ENCODE measurements at regions of chr6 and their contacts with region 1.

Region 1: GRCh38 chr6:133952815-133953633 is at the start of gene TBPL1:
- DNase-seq: peak; percentile 92
- H3K4me3 Mint-ChIP-seq: peak within 1 kb of the TSS; percentile 87
- H3K27ac Mint-ChIP-seq: peak within 1 kb of the TSS; percentile 86
- H3K4me1 Mint-ChIP-seq: peaks cover 36% of the 10 kb centered on the region
- H3K27me3 Mint-ChIP-seq: no peaks in the 10 kb centered on the region
- total RNA-seq, gene TBPL1: 27.0 to 27.6 TPM

Region 2: DNA sequence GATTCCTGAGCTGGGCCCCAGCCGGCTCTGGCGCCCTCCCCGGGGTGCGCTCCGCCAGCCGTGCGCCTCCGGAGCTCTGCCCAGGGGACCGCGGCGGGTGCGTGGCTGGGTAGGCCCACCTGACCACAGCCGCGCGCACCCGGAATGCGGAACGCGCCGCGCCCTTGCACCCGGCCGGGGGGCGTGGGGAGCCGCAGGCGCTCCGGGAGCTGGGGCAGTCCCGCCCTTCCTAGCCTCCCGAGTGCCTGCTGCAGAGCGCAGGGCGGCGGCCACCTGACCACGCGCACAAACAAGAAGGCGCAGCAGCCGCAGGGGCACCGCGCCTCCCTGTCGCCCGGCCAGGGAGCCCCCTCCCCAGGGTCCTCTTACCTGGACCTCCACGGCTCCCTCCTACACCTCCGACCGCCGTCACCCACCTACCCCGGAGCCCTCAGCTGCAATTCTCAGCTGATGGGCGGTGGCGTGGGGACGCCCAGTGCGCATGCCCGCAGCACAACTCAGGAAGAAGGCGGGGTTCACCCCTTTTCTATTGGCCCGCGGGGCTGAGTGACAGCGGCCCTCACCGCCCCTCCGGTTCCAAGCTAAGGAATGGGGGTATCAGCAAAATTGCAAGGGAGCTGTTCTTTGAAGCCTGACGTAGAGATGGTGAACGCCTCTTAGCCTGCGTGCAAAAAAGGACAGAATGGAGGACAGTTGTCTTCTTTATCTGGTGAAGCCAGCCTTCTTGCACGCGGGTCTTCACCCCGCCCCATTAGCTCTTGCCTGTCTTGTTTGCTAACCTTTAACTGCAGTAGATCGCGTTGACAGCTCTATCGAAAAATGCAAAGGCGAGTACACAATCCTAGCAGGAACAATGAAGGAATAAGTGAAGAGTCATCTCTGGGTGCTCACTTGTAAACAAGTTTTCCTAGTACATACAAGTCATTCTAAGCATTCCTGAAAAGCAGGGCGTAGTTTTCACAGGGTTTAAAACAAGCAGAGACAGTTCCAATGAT is 1440.1 kb before region 1 on chr6 and contains the start of gene STX7:
- CTCF ChIA-PET with region 1: no interaction called
- intact Hi-C with region 1: loop called (anchors 5 kb)
- DNase-seq: peak; percentile 83
- H3K4me3 Mint-ChIP-seq: peak within 1 kb of the TSS; percentile 95
- H3K27ac Mint-ChIP-seq: no peak within 1 kb of the TSS
- H3K4me1 Mint-ChIP-seq: peaks cover 26% of the 10 kb centered on the region
- H3K27me3 Mint-ChIP-seq: no peaks in the 10 kb centered on the region
- total RNA-seq, gene STX7: 11.3 to 11.7 TPM

Region 3: DNA sequence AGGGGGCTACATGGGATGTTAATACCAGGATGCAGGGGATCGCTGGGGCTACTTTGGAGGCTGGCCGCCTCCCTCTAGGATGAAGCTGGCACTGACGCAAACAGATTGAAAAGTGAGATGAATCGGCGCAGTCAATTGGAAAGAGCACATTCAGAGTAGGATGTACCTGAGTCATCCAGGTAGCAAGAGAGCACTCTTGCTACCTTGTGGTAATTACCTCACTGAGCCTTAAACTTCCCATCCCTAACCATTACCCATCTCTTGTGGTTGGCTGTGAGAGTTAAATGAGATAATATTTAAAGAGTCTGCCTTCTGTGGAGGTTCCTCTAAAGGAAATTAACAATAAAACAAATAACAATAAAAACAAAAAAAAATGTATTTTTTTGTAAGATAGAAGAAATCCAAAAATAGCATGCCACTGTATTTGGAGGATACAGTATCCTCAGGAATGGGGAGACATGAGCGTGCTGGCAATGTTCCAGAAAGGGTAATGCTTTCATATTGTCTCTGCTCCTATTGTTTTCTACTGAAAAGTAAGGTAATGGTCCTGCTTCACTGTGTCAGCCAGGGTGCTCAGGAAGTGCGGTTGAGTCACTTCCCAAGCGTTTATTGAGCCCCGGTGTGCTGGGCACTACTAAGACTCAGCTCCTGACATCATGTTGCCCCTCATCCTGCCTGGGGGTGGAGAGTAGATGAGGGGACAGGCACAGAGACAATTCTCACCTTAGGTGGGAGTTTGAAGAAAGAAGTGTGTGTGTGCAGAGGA is 410.8 kb before region 1 on chr6:
- CTCF ChIA-PET with region 1: no interaction called
- intact Hi-C with region 1: no loop called
- DNase-seq: peak; percentile 5
- H3K4me3 Mint-ChIP-seq: no peak overlapping the region
- H3K27ac Mint-ChIP-seq: no peak overlapping the region
- H3K4me1 Mint-ChIP-seq: no peaks in the 10 kb centered on the region
- H3K27me3 Mint-ChIP-seq: peaks cover 17% of the 10 kb centered on the region

Region 4: GRCh38 chr6:133966654-133967329 is 13.8 kb after region 1 on chr6:
- CTCF ChIA-PET with region 1: interaction called, 5 read pairs
- intact Hi-C with region 1: loop called (anchors 1 kb)
- DNase-seq: no peak
- H3K4me3 Mint-ChIP-seq: no peak overlapping the region
- H3K27ac Mint-ChIP-seq: no peak overlapping the region
- H3K4me1 Mint-ChIP-seq: peaks cover 64% of the 10 kb centered on the region
- H3K27me3 Mint-ChIP-seq: no peaks in the 10 kb centered on the region

Region 5: DNA sequence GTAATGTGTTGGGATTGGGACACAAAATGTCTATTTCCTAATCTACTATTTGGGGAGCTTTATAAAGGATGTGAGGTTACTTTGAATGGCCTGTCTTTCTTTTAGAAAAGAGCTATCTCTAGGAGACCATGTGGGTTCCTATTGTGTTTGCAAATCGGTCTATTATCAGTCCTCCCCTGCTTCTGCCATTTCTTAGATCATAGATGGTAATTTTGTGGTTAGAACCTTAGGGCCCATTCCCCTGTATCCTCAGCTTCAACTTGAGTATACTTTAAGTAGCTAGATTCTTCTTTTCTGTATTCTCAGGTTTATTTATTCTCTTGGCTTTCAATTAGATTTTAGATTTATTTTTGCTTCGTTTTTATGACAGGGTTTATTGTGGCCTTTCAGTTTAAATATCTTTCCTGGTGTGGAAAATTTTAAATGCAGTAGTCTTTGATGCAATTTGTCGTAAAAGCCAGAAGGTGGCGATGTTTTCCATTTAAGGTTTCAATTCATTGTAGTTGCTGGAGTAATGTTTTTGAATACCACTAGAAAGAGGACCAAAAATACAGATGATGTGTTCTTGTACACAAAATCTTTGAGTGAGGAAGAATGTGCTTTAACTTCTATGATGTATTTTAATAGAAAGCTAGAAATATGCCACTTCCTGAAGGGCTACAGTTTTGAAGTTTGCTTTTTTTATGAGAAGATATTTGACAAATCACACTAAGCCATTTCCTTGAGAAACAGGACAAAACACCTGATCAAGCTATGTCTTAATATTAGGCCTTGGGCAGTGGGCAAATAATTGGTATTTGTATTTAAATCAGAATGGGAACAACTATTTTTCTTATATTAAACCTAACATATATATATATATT is 20.3 kb after region 1 on chr6:
- CTCF ChIA-PET with region 1: interaction called, 14 read pairs
- intact Hi-C with region 1: loop called (anchors 2 kb)
- DNase-seq: no peak
- H3K4me3 Mint-ChIP-seq: no peak overlapping the region
- H3K27ac Mint-ChIP-seq: no peak overlapping the region
- H3K4me1 Mint-ChIP-seq: peaks cover 32% of the 10 kb centered on the region
- H3K27me3 Mint-ChIP-seq: no peaks in the 10 kb centered on the region

Region 6: GRCh38 chr6:134035823-134036296 is 82.8 kb after region 1 on chr6:
- CTCF ChIA-PET with region 1: no interaction called
- intact Hi-C with region 1: no loop called
- DNase-seq: no peak
- H3K4me3 Mint-ChIP-seq: no peak overlapping the region
- H3K27ac Mint-ChIP-seq: no peak overlapping the region
- H3K4me1 Mint-ChIP-seq: peaks cover 3% of the 10 kb centered on the region
- H3K27me3 Mint-ChIP-seq: no peaks in the 10 kb centered on the region

Region 7: GRCh38 chr6:134047673-134048072 is 94.6 kb after region 1 on chr6:
- CTCF ChIA-PET with region 1: no interaction called
- intact Hi-C with region 1: loop called (anchors 1 kb)
- DNase-seq: no peak
- H3K4me3 Mint-ChIP-seq: no peak overlapping the region
- H3K27ac Mint-ChIP-seq: no peak overlapping the region
- H3K4me1 Mint-ChIP-seq: peaks cover 8% of the 10 kb centered on the region
- H3K27me3 Mint-ChIP-seq: peaks cover 2% of the 10 kb centered on the region

Region 8: GRCh38 chr6:134529921-134530320 is 576.9 kb after region 1 on chr6:
- CTCF ChIA-PET with region 1: no interaction called
- intact Hi-C with region 1: loop called (anchors 10 kb)
- DNase-seq: no peak
- H3K4me3 Mint-ChIP-seq: no peak overlapping the region
- H3K27ac Mint-ChIP-seq: no peak overlapping the region
- H3K4me1 Mint-ChIP-seq: peaks cover 27% of the 10 kb centered on the region
- H3K27me3 Mint-ChIP-seq: no peaks in the 10 kb centered on the region

Region 9: DNA sequence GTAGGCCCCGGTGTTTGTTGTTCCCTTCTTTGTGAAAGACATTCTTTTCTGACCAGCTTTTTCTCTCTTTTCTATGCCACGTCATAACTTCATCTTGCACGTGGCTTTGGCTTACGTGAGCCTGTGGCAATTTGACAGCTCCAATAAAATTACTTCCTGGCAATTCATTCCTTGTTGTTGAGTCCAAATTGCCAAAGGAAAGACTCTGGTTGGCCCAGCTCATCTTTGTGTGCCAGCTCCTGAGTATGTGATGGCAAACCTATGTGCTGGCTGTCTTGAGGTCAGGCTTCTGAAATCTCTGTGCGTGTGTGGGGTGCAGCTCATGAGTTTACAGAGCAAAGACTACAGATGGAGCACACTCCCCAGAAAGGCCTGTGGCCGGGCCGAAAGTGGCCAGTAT is 637.4 kb after region 1 on chr6:
- CTCF ChIA-PET with region 1: no interaction called
- intact Hi-C with region 1: no loop called
- DNase-seq: no peak
- H3K4me3 Mint-ChIP-seq: no peak overlapping the region
- H3K27ac Mint-ChIP-seq: no peak overlapping the region
- H3K4me1 Mint-ChIP-seq: no peaks in the 10 kb centered on the region
- H3K27me3 Mint-ChIP-seq: no peaks in the 10 kb centered on the region

Measured in activated naive CD4-positive, alpha-beta T cell treated with anti-CD3 and anti-CD28 coated beads for 36 hours (primary cell).